ENCODE measurements at regions of chr19 and their contacts with region 1.

Region 1: DNA sequence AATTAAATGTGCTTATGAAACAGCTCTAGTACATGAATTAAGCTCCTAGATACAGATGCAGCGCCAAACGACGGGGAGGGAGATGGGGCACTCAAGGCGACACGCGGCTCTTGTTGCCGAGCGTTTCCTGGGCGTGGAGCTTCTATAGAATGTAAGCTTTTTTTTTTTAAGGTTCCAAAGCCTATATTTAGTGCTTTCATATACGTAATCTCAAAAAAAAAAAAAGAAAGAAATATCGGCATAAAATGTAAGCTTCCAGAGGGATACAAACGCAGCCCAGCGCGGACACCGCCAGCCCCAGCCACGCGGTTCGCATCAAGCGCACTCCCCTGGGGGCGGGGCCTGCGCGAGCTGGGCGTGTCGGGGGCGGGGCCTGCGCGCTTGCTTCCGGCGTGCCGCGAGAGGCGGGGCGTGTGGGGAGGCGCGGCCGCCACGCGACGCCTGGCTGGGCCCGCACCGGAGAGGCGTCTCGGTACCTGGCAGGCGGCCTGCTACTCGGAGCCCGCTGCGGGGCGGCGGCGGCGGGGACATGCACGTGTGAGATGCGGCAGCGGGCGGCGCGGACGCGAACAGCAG is at the start of gene URI1:
- DNase-seq: peak; percentile 97
- ATAC-seq: peak; percentile 82
- H3K4me3 Mint-ChIP-seq: peak within 1 kb of the TSS; percentile 96
- H3K27ac Mint-ChIP-seq: peak within 1 kb of the TSS; percentile 95
- H3K4me1 Mint-ChIP-seq: peaks cover 41% of the 10 kb centered on the region
- H3K27me3 Mint-ChIP-seq: no peaks in the 10 kb centered on the region
- total RNA-seq, gene URI1: 61.3 to 69.7 TPM

Region 2: GRCh38 chr19:29587518-29587986 is 354.4 kb before region 1 on chr19:
- CTCF ChIA-PET with region 1: no interaction called
- POLR2A ChIA-PET with region 1: no interaction called
- intact Hi-C with region 1: loop called in 1 of 2 experiments (anchors 5 kb)
- DNase-seq: peak; percentile 87
- ATAC-seq: peak; percentile 99
- H3K4me3 Mint-ChIP-seq: no peak overlapping the region
- H3K27ac Mint-ChIP-seq: peak overlapping the region; percentile 89
- H3K4me1 Mint-ChIP-seq: peaks cover 30% of the 10 kb centered on the region
- H3K27me3 Mint-ChIP-seq: peaks cover 27% of the 10 kb centered on the region

Region 3: GRCh38 chr19:29714953-29715700 is 226.8 kb before region 1 on chr19 and contains the start of gene C19orf12:
- CTCF ChIA-PET with region 1: interaction called, 3 read pairs
- POLR2A ChIA-PET with region 1: interaction called, 3 read pairs
- intact Hi-C with region 1: loop called in 1 of 2 experiments (anchors 1 kb)
- DNase-seq: peak; percentile 82
- ATAC-seq: peak; percentile 56
- H3K4me3 Mint-ChIP-seq: peak within 1 kb of the TSS; percentile 92
- H3K27ac Mint-ChIP-seq: peak within 1 kb of the TSS; percentile 99
- H3K4me1 Mint-ChIP-seq: peaks cover 52% of the 10 kb centered on the region
- H3K27me3 Mint-ChIP-seq: no peaks in the 10 kb centered on the region
- total RNA-seq, gene C19orf12: 26.7 to 35.7 TPM

Region 4: DNA sequence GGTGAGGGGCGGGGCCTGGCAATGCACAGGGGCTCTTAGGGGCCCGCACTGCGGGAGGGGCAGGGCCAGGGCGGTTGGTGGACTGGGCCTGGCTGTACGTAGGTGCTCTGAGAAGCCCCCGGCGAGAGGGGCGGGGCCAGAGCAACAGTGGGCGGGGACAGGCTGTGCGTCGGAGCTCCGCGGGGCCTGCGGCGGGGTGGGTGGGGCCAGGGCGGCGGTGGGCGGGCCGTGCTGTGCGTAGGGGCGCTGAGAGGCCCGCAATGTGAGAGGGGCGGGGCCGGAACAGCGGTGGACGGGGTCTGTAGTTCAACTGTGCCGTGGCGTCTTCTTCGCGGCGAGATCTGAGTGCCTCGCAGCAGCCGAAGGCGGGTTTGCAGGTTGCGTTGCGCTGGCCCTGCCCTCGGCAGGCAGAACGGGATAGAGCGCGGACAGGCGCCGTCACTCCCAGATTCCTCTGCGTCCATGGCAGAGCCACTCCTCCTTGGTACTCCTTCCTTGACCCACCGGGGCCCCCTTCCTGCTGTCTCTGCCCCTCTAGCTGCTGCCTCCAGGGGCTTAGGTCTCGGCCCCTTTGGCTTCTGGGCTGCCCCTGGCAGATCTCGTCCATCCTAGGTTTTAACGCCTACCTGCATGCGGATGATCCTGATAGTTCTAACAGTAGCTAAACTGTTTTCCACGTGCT is 96.9 kb before region 1 on chr19:
- CTCF ChIA-PET with region 1: no interaction called
- POLR2A ChIA-PET with region 1: no interaction called
- intact Hi-C with region 1: loop called (anchors 1 kb)
- DNase-seq: peak; percentile 99
- ATAC-seq: peak; percentile 83
- H3K4me3 Mint-ChIP-seq: peak overlapping the region; percentile 83
- H3K27ac Mint-ChIP-seq: peak overlapping the region; percentile 83
- H3K4me1 Mint-ChIP-seq: peaks cover 11% of the 10 kb centered on the region
- H3K27me3 Mint-ChIP-seq: no peaks in the 10 kb centered on the region

Region 5: DNA sequence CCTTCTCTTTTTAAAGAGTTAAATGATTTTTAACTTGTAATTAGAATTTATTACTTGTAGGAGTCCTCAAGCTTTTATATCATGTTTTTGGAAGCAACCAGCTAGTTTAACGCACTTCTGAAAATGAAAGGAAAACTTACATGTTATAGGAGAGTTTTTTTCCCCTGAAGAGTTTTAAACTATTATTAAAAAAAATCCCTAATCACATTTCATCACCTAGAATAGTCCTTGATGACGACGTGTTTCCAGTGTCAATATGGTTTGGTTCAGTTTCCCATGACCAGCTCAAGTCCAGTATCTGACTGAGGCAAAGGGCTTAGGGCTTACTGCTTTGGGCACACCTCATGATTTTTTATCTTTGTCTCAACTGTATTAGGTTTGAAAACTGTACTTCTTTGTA is 36.2 kb after region 1 on chr19:
- CTCF ChIA-PET with region 1: no interaction called
- POLR2A ChIA-PET with region 1: interaction called, 4 read pairs
- intact Hi-C with region 1: loop called in 1 of 2 experiments (anchors 5 kb)
- DNase-seq: no peak
- ATAC-seq: peak; percentile 42
- H3K4me3 Mint-ChIP-seq: no peak overlapping the region
- H3K27ac Mint-ChIP-seq: peak overlapping the region; percentile 37
- H3K4me1 Mint-ChIP-seq: peaks cover 57% of the 10 kb centered on the region
- H3K27me3 Mint-ChIP-seq: no peaks in the 10 kb centered on the region

Region 6: GRCh38 chr19:30011051-30011578 is 69.2 kb after region 1 on chr19:
- CTCF ChIA-PET with region 1: no interaction called
- POLR2A ChIA-PET with region 1: no interaction called
- intact Hi-C with region 1: no loop called
- DNase-seq: no peak
- ATAC-seq: no peak
- H3K4me3 Mint-ChIP-seq: no peak overlapping the region
- H3K27ac Mint-ChIP-seq: no peak overlapping the region
- H3K4me1 Mint-ChIP-seq: peaks cover 12% of the 10 kb centered on the region
- H3K27me3 Mint-ChIP-seq: no peaks in the 10 kb centered on the region

Region 7: DNA sequence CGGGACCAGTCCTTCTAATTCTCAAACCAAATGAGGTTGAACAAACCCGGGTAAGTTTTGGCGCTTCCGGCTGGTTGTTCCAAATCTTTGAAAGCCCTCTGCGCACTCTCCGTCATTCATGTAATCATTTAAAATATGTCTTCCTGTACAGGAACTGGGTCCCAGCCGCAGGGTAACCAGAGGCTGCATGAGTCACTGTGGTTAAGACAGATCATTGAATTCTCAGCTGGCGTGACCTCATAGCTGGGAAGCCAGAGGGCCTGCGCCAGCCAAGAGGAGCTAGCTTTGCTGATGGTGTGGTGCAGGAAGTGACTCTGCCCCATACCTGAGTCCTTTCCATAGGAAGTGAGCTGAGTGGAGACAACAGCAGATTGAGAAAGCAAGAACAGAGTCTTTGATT is 1272.2 kb after region 1 on chr19:
- CTCF ChIA-PET with region 1: no interaction called
- POLR2A ChIA-PET with region 1: no interaction called
- intact Hi-C with region 1: loop called in 1 of 2 experiments (anchors 5 kb)
- DNase-seq: peak; percentile 96
- ATAC-seq: peak; percentile 94
- H3K4me3 Mint-ChIP-seq: peak overlapping the region; percentile 61
- H3K27ac Mint-ChIP-seq: peak overlapping the region; percentile 99
- H3K4me1 Mint-ChIP-seq: peaks cover 36% of the 10 kb centered on the region
- H3K27me3 Mint-ChIP-seq: no peaks in the 10 kb centered on the region